ENCODE measurements at regions of chr17 and their contacts with region 1.

Region 1: DNA sequence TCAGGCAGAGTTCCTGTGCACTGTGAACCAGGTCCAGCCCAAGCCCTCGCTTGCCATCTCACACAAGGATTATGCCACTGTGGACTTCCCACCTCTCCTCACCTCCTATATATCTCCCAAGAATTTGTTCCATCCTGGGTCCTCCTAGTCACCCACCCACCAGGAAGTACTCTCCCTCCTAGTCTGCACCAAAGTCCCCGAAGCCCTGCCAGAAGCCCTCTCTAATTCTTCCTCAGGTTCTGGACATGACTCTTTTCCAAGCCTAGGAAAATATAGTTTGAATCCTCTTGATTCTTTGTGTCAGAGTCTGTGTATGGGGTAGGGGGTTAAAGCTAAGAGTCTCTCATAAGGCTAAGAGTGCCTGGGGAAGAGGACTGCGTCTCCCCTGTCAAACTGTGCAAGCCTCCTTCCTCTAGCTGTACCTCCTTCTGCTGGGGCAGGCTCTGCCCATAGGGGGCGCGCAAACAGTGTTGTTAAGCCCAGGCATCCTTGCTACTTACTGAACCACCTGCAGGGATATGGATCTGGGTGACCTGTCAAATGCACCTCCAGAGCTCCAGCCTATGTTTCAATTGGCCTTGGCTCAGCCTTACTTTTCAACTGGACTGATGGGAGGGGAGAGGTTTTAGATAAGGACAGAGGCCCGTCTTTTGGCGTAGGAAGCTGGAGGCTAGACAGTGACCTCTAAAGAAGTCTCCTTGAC is 16.6 kb upstream of the DLX4 start:
- DNase-seq: peak; percentile 87
- ATAC-seq: peak; percentile 93
- H3K4me3 Mint-ChIP-seq: no peak overlapping the region
- H3K27ac Mint-ChIP-seq: no peak overlapping the region
- H3K4me1 Mint-ChIP-seq: no peaks in the 10 kb centered on the region
- H3K27me3 Mint-ChIP-seq: peaks cover 48% of the 10 kb centered on the region

Region 2: GRCh38 chr17:49926886-49927285 is 25.5 kb before region 1 on chr17:
- CTCF ChIA-PET with region 1: interaction called, 10 read pairs
- DNase-seq: no peak
- ATAC-seq: no peak
- H3K4me3 Mint-ChIP-seq: no peak overlapping the region
- H3K27ac Mint-ChIP-seq: no peak overlapping the region
- H3K4me1 Mint-ChIP-seq: no peaks in the 10 kb centered on the region
- H3K27me3 Mint-ChIP-seq: peaks cover 32% of the 10 kb centered on the region

Region 3: DNA sequence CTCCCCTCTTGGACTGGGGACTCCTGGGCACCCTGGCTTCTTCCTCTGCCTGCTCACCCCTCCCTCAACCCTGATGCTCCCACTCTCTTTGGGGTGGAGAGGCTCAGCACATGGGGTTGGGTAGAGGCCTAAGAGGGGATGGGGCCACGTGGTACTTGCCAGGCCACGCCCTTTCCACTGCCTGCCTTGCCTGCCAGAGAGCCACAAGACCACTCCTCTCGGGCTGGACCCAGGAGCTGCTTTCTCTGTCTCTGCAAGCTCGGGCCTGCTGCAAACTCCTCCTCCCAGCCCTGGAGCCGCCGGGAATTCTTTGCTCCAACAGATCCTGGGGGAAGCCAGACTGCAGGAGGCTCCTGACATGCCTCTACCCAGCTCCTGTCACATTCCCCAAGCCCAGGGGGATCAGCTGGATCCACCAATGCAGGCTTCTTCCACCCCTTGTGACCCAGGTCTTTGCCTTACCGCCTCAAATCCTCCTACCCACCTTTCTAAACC is 28.4 kb after region 1 on chr17:
- CTCF ChIA-PET with region 1: interaction called, 13 read pairs
- DNase-seq: no peak
- ATAC-seq: no peak
- H3K4me3 Mint-ChIP-seq: no peak overlapping the region
- H3K27ac Mint-ChIP-seq: no peak overlapping the region
- H3K4me1 Mint-ChIP-seq: no peaks in the 10 kb centered on the region
- H3K27me3 Mint-ChIP-seq: peaks cover 53% of the 10 kb centered on the region

Region 4: GRCh38 chr17:50003911-50004310 is 51.6 kb after region 1 on chr17:
- CTCF ChIA-PET with region 1: interaction called, 273 read pairs
- DNase-seq: no peak
- ATAC-seq: no peak
- H3K4me3 Mint-ChIP-seq: no peak overlapping the region
- H3K27ac Mint-ChIP-seq: no peak overlapping the region
- H3K4me1 Mint-ChIP-seq: no peaks in the 10 kb centered on the region
- H3K27me3 Mint-ChIP-seq: peaks cover 62% of the 10 kb centered on the region

Measured in activated CD8-positive, alpha-beta memory T cell treated with anti-CD3 and anti-CD28 coated beads, Interleukin-2, amount 10 ng/mL, durations not matched to agents 7 days and 5 days (primary cell).